ENCODE measurements at regions of chr1 and their contacts with region 1.

Region 1: GRCh38 chr1:86704458-86704971 is at the start of gene SH3GLB1:
- DNase-seq: peak; percentile 90
- H3K4me3 Mint-ChIP-seq: peak within 1 kb of the TSS; percentile 97
- H3K27ac Mint-ChIP-seq: peak within 1 kb of the TSS; percentile 94
- H3K4me1 Mint-ChIP-seq: peaks cover 46% of the 10 kb centered on the region
- H3K27me3 Mint-ChIP-seq: no peaks in the 10 kb centered on the region
- total RNA-seq, gene SH3GLB1: 79.6 to 82.8 TPM

Region 2: DNA sequence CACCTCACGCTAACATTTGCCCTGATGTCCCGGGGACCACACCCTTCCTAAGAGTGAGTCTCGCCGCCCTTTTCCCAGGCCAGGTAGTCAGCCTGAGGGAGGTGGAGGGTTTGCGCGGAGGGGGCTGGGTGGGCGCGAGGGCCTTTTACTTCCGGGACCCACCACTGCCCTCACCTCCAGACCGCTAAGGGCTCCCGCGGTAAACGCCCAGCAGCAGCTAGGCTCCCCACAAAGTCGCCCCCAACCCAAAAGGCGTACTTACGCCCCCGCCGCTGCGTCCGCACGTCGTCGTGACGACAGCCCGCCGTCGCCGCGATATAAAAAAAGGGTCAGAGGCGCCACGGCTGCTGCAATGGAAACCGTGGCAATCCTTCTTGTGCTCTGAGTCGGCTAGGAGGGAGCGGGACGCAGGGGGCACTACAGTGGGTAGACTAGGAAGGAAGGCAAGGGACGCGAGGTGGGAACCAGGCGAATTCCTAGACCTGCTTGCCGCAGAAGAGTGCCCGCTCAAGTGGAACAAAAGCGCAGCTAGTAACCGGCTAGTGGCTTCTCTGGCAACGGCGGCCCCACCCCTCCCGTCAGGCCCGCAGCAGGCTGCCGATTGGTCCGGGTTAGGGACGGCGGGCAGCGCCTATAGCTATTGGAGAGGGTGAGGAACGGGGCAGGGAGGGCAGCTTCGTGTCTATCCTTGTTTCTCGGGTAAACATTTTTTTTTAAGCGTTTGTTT is 308.6 kb before region 1 on chr1 and contains the start of gene ODF2L:
- CTCF ChIA-PET with region 1: interaction called, 5 read pairs
- POLR2A ChIA-PET with region 1: interaction called, 33 read pairs
- DNase-seq: peak; percentile 94
- H3K4me3 Mint-ChIP-seq: peak within 1 kb of the TSS; percentile 95
- H3K27ac Mint-ChIP-seq: peak within 1 kb of the TSS; percentile 90
- H3K4me1 Mint-ChIP-seq: peaks cover 53% of the 10 kb centered on the region
- H3K27me3 Mint-ChIP-seq: no peaks in the 10 kb centered on the region
- total RNA-seq, gene ODF2L: 63.1 to 71.3 TPM

Region 3: GRCh38 chr1:86733340-86733739 is 28.8 kb after region 1 on chr1:
- CTCF ChIA-PET with region 1: interaction called, 12 read pairs
- POLR2A ChIA-PET with region 1: interaction called, 18 read pairs
- DNase-seq: no peak
- H3K4me3 Mint-ChIP-seq: no peak overlapping the region
- H3K27ac Mint-ChIP-seq: no peak overlapping the region
- H3K4me1 Mint-ChIP-seq: peaks cover 4% of the 10 kb centered on the region
- H3K27me3 Mint-ChIP-seq: no peaks in the 10 kb centered on the region

Region 4: GRCh38 chr1:86741947-86742572 is 37.5 kb after region 1 on chr1:
- CTCF ChIA-PET with region 1: interaction called, 35 read pairs
- POLR2A ChIA-PET with region 1: interaction called, 59 read pairs
- DNase-seq: peak; percentile 28
- H3K4me3 Mint-ChIP-seq: no peak overlapping the region
- H3K27ac Mint-ChIP-seq: no peak overlapping the region
- H3K4me1 Mint-ChIP-seq: peaks cover 4% of the 10 kb centered on the region
- H3K27me3 Mint-ChIP-seq: no peaks in the 10 kb centered on the region

Region 5: DNA sequence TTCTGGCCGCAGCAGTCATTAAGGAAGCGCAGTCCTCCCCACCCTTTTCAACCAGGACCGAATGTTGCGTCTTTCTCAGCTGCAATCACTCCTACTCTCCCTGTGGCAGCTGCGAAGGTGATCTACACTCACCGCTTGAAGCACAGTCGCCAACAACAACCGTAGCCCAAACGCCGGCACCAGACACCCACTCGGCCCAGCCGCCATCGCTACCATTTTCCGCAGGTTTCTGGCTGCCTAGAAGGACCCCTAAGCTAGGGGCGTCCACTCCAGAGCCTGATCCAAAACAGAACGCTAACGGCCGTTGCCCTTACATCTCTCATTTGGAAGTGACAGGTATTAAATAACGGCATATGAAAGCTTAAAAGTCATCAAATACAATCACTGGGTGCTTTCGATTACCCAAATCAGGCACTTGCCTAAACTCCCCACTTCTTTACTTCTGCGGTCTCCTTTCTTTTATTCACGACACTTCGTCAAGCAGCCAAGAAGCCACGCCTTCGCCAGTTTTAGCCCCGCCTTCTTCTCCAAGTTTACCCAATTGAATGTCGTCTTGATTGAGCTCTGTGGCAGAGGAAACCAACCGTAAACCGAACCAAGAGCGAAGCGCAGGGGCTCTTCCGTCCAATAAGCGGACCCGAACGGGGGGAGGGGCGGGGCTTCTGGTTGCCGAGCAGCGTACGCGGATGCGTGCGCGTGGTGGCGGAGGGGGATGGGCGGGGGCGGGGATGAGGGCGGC is 209.6 kb after region 1 on chr1 and contains the start of gene SELENOF:
- CTCF ChIA-PET with region 1: interaction called, 29 read pairs
- POLR2A ChIA-PET with region 1: interaction called, 96 read pairs
- DNase-seq: peak; percentile 99
- H3K4me3 Mint-ChIP-seq: no peak within 1 kb of the TSS
- H3K27ac Mint-ChIP-seq: no peak within 1 kb of the TSS
- H3K4me1 Mint-ChIP-seq: peaks cover 42% of the 10 kb centered on the region
- H3K27me3 Mint-ChIP-seq: no peaks in the 10 kb centered on the region
- total RNA-seq, gene SELENOF: 178 to 180 TPM

Region 6: DNA sequence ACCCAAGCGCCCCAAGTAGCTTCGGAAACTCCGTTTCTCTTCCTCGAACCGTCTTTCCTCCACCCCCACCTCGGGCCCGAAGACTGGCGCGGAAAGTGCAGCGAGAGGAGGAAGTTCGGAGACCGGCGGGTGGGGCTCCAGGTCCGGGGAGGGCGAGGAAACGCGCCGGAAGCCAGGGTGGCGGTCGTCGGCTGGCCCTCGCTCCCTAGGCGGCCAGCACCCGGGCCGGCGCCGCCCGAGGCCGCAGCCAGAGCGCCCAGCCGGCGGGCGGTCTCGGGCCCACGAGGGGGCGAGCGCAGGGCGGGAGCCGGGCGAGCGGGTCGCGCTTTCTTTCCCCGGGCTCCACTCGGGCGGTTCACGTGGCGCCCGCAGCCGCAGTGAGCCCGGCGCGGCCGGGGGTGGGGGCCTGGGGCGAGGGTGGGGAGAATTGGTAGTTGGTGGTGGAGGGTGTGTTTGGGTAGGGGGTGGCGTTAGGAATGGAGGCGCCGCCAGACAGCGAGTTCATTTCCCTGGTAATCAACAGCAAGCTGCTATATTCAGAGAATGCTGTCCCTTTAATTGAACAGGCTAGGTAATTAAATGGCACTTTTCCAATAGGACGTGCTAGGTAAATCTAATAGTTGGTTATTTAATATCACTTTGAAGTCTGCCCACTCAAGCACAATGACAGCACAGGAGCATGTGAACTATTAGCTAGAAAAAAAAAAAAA is 630.8 kb after region 1 on chr1:
- CTCF ChIA-PET with region 1: no interaction called
- POLR2A ChIA-PET with region 1: interaction called, 13 read pairs
- DNase-seq: peak; percentile 77
- H3K4me3 Mint-ChIP-seq: peak overlapping the region; percentile 89
- H3K27ac Mint-ChIP-seq: peak overlapping the region; percentile 88
- H3K4me1 Mint-ChIP-seq: peaks cover 62% of the 10 kb centered on the region
- H3K27me3 Mint-ChIP-seq: no peaks in the 10 kb centered on the region

Measured in activated CD4-positive, alpha-beta memory T cell treated with anti-CD3 and anti-CD28 coated beads, Interleukin-2, amount 10 ng/mL, durations not matched to agents 7 days and 5 days (primary cell).